ENCODE measurements at regions of chr7 and their contacts with region 1.

Region 1: DNA sequence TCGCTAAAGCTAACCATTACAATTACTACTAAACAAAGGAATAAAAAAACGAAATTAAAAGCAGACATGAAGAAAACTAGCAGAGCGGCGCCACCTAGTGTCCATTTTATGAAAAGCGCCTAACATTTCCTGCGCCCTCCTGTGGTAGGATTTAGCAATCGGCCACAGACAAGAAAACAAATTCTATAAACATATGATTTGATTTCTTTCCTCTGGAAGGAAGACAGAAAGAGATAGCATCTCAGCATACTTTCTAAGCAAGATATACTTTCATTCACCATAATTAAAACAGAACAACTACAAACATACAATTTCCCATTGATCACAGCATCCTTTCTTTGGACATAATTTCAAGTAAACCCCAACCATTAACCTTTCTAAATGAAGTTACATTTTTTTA is 337.7 kb upstream of the NPVF start:
- DNase-seq: peak; percentile 66 to 67
- H3K4me3 ChIP-seq: no peak overlapping the region
- H3K27ac ChIP-seq: no peak overlapping the region
- H3K4me1 ChIP-seq: no peaks in the 10 kb centered on the region
- H3K27me3 ChIP-seq: peaks cover 45% of the 10 kb centered on the region
- CTCF ChIP-seq: peak; percentile 100

Region 2: DNA sequence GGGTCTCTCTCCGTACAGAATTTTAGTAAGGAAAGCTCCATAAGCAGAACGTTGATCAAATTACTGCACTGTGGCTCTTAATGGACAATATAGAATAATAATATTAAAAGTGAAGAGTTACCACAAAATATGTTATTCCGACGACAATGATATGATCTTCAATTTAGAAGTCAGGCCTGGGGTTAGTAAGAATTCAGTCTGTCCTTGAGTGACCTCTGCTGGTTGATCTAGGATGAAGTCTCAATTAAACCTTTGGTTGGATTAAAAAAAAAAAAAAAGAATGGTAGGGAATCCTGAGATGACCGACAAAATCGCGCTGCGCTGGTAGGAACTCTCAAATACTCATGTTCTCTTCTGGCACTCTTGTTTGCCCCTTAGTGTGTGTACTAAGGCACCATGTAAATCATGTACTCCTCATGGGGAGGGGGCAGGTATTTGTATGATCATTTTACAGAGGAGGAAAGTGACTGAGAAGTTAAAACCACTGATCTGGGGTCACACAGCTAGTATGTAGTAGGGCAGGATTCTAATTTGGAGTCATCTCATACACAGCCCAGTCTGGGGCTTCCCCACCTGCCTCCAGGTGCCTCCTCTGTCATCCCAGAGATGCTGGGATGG is 176.4 kb before region 1 on chr7:
- CTCF ChIA-PET with region 1: no interaction called
- POLR2A ChIA-PET with region 1: no interaction called
- intact Hi-C with region 1: loop called (anchors 1 kb)
- DNase-seq: peak in 1 of 2 experiments; percentile 48
- H3K4me3 ChIP-seq: no peak overlapping the region
- H3K27ac ChIP-seq: no peak overlapping the region
- H3K4me1 ChIP-seq: no peaks in the 10 kb centered on the region
- H3K27me3 ChIP-seq: peaks cover 78% of the 10 kb centered on the region
- CTCF ChIP-seq: peak; percentile 69

Region 3: GRCh38 chr7:25478925-25479324 is 87.0 kb before region 1 on chr7:
- CTCF ChIA-PET with region 1: no interaction called
- POLR2A ChIA-PET with region 1: no interaction called
- intact Hi-C with region 1: no loop called
- DNase-seq: no peak
- H3K4me3 ChIP-seq: no peak overlapping the region
- H3K27ac ChIP-seq: no peak overlapping the region
- H3K4me1 ChIP-seq: no peaks in the 10 kb centered on the region
- H3K27me3 ChIP-seq: peaks cover 24% of the 10 kb centered on the region
- CTCF ChIP-seq: no peak

Region 4: DNA sequence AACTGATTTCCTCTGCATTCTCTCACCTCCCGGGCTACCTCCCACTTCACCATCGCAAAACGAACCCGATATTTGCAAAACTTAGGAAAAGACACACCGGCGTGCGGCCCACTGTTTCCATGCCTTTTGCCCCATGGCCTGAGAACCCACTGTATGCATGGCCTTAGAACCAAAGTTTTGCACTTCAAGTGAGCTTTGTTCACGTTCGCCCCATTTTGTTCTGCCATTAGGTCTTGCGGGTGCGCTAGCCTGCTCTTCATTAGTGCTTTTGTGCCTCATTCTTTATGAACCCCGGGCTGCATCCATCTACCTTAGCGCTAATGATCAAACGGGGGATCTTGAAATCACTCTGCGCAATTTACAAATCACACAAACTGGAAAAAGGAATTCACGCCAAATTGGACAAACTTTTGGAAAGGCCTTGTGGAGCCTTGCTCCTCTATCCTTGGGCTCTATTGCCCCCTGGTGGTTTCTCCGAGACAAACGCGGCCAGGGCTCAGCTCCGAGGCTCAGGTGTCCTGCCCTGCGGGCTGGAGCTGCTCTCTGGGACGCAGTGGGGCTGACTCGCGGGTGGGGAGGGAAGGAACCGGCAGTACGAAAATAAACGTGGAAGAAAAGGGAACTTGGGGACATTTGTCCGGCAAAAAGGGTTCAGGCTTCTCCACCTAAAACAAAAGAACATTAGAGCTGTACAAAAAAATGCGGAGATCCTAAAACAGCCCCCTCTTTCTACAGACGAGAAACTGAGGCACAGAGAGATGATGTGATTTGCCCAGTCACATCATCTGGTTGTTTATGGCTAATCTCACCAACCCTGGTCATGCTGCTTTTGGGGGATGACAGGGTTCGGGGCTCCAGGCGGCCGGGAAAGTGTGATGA is 285.6 kb after region 1 on chr7:
- CTCF ChIA-PET with region 1: no interaction called
- POLR2A ChIA-PET with region 1: no interaction called
- intact Hi-C with region 1: loop called (anchors 2 kb)
- DNase-seq: peak; percentile 58 to 65
- H3K4me3 ChIP-seq: no peak overlapping the region
- H3K27ac ChIP-seq: no peak overlapping the region
- H3K4me1 ChIP-seq: peaks cover 42% of the 10 kb centered on the region
- H3K27me3 ChIP-seq: peaks cover 27% of the 10 kb centered on the region
- CTCF ChIP-seq: peak; percentile 92

Measured in PC-9 (cell line).